Tibial artery (tissue), 4 donors: ENCODE measurements at regions of chr11 and their contacts with region 1.

Region 1: DNA sequence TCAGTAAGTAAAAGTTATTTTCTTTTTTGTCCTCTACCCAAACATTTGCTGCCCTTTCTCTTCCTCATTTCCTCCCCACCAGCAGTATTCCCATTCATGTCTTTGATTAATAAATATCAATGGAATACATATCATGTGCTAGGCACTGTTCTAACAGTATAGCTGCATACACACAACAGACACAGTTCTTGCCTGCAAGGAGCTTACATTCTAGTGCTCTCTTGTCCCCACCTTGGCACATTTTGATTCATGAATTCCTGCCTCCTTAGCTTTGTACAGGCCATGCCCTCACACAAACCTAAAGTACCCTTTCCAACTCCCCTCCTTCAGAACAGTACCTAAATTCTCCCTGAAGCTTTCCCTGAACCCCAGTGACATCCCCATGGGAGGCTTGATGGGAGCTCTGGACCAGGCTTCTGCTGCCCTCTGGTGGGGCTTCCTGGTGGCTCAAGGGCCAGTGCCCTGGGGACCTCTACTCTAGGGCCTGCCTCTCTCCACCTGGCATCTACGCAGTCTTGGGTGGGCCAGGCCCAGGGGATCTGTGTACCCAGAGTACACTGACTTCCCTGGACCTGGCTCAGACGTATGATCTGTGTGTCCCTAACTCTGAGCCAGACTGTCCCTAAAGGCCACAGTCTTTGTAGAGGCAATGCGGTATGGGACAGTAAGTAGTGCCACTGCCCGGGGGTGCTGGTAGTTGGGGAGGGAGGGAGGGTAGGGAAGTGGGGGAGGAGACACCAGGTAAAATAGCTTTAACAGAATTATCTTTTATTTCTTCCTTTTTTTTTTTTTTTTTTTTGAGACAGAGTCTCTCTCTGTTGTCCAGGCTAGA is 14.1 kb downstream of the RPS13 start:
- DNase-seq: no peak
- H3K4me3 ChIP-seq: no peak overlapping the region
- H3K27ac ChIP-seq: no peak overlapping the region
- H3K4me1 ChIP-seq: no peaks in the 10 kb centered on the region
- H3K27me3 ChIP-seq: no peaks in the 10 kb centered on the region
- CTCF ChIP-seq: peak; percentile 55 to 64

Region 2: GRCh38 chr11:16809886-16810668 is 253.3 kb before region 1 on chr11:
- intact Hi-C with region 1: loop called (anchors 10 kb)
- DNase-seq: peak; percentile 56 to 74
- H3K4me3 ChIP-seq: no peak overlapping the region
- H3K27ac ChIP-seq: no peak overlapping the region
- H3K4me1 ChIP-seq: peaks cover 0 to 20% (median 9%) of the 10 kb centered on the region in 4 donors
- H3K27me3 ChIP-seq: no peaks in the 10 kb centered on the region
- CTCF ChIP-seq: no peak

Region 3: DNA sequence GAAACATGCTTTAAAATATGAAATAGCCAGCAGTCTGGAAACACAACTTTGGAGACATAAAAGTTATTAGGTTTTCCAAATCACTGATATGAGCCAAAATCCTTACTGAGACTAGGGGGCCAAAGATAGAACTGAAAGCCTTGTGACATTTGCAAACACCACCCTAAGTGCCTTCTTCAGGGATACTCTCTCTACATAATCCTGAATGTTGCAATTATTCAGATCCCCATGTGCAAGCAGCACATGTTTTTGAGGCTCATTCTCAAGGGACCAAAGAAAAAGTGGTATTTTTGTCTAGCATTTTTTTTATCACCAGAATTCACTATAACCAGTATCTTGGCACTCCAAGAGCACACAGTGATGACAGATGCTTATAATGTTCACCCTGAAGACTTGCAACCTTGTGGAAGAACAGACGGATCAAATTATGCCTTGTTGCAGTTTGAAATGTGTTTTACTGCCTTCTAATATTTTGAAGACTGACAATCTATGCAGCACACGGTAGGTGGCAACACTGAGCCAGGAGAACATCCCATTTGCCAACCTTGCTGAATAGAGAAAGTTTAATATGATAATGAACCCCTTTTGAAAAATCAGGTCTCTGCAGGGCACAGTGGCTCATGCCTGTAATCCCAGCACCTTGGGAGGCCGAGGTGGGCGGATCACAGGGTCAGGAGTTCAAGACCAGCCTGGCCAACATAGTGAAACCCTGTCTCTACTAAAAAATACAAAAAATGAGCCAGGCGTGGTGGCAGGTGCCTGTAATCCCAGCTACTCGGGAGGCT is 127.7 kb before region 1 on chr11:
- intact Hi-C with region 1: loop called (anchors 2 kb)
- DNase-seq: no peak
- H3K4me3 ChIP-seq: no peak overlapping the region
- H3K27ac ChIP-seq: no peak overlapping the region
- H3K4me1 ChIP-seq: peaks cover 0 to 20% (median 14%) of the 10 kb centered on the region in 4 donors
- H3K27me3 ChIP-seq: no peaks in the 10 kb centered on the region
- CTCF ChIP-seq: peak; percentile 32 to 60